ENCODE measurements at regions of chr6 and their contacts with region 1.

Region 1: DNA sequence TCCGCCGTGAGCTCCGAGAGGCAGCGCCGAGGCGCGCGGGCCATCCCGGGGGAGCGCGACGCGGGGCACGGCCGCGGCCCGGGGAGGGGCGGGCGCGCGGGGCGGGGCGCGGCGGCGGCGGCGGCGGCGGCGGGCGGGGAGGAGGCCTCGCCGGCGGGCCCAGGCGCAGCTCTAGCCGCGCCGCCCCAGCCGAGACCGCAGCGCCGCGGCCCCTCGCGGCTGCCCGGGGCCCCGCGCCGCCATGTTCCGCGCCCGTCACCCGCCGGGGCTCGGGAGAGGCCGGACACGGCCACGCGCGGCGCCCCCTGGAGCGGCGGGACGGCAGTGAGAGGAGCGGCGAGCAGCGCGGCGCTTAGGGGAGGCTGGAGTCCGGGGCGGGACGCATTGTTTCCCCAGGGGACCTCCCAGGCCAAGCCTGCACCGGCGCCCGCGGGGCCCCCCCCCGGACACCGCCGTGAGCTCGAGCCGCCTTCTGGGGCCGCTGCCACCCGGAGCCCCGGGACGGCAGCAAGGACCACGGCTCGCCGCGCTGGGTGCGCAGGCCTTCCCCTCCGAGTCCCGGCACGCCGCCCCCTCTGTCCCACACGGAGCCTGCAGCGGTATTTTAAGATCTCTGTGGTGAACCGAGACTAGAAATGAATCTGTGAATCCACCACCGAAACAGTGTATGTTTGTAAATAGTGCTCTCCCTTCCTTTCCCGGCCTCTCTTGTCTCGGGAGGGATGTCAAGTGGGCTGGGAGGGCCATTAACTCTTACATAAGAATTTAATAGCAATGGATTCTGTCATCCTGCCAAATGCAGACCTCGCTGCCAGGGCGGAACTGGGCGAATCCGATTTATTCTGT is at the start of gene KIF13A:
- DNase-seq: peak; percentile 5
- H3K4me3 Mint-ChIP-seq: peak within 1 kb of the TSS; percentile 85
- H3K27ac Mint-ChIP-seq: no peak within 1 kb of the TSS
- H3K4me1 Mint-ChIP-seq: peaks cover 9% of the 10 kb centered on the region
- H3K27me3 Mint-ChIP-seq: peaks cover 64% of the 10 kb centered on the region
- total RNA-seq, gene KIF13A: not detected in 2 replicates

Region 2: DNA sequence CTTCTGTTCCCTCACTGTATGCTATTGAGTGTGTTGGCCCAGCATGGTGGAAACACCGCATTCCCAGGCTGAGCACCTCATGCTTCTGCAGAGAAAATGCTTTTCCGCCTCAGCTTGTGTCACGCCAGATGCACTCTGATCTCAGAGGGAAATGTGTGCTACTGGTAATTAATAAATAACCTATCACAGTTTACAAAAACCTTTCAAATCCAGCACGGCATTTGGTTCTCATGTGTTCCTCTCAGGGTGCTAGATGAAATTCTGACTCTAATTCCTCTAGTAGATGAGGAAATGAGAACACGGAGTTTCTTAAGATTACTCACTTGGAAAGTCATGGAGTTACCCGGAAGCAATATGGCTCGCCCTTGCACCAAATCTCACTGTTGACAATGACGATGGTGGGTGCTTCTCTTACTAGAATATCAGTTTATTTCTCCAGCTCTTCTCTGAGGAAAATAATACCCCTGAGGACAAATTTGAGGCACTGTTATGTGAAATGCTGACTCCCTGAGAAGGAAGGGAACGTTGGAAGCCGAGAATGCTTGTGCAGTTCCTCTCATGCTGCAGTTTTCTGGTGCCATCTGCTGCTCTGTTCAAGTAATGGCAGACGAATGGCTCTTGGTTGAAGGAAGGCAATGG is 515.9 kb after region 1 on chr6:
- intact Hi-C with region 1: loop called (anchors 10 kb)
- DNase-seq: no peak
- H3K4me3 Mint-ChIP-seq: no peak overlapping the region
- H3K27ac Mint-ChIP-seq: no peak overlapping the region
- H3K4me1 Mint-ChIP-seq: no peaks in the 10 kb centered on the region
- H3K27me3 Mint-ChIP-seq: peaks cover 6% of the 10 kb centered on the region

Region 3: GRCh38 chr6:19219931-19220330 is 1232.1 kb after region 1 on chr6:
- intact Hi-C with region 1: no loop called
- DNase-seq: no peak
- H3K4me3 Mint-ChIP-seq: no peak overlapping the region
- H3K27ac Mint-ChIP-seq: no peak overlapping the region
- H3K4me1 Mint-ChIP-seq: no peaks in the 10 kb centered on the region
- H3K27me3 Mint-ChIP-seq: no peaks in the 10 kb centered on the region